Left lung (tissue), 14 donors: ENCODE measurements at regions of chr1 and their contacts with region 1.

Region 1: DNA sequence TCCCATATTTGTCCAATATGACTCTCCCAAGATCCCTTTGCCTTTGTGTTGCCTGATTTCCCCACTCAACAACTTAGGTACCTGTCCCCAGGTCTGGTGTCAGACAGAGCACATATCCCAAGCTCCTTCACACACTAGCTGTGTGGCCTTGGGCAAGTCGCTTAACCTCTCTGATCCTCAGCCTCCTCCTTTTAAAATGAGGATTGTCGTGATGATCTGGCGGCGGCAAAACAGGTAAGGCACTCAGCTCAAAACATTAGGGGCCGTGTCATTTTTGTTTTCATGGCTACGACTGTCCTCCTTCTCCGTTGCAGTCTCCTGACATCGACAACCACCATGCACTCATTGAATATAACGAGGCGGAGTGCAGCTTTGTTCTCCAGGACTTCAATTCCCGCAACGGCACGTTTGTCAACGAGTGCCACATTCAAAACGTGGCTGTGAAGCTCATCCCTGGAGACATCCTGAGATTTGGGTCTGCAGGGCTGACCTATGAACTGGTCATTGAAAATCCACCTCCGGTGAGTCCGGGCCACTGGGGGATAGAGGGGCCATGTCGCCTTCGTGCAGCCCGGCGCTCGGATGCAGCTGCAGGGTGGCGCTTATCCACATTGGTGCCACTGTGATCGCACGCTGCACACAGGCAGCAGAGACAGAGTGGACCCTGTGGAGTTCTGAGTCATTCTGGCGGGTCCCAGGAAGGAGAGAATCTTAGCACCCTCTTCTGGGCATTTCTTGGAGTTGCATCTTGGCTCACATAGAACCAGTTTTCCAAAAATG is 25.2 kb downstream of the FHAD1 start:
- DNase-seq: peak in 3 of 4 donors; percentile 66 to 80 (median 69)
- ATAC-seq: peak; percentile 99
- H3K4me3 ChIP-seq: no peak overlapping the region
- H3K27ac ChIP-seq: no peak overlapping the region
- H3K4me1 ChIP-seq: peaks cover 0 to 7% of the 10 kb centered on the region in 2 donors
- H3K27me3 ChIP-seq: no peaks in the 10 kb centered on the region
- CTCF ChIP-seq: peak; percentile 80 to 82

Region 2: GRCh38 chr1:15128520-15129313 is 143.5 kb before region 1 on chr1:
- intact Hi-C with region 1: loop called in 1 of 2 experiments (anchors 5 kb)
- DNase-seq: peak; percentile 55 to 85 (median 73)
- ATAC-seq: peak; percentile 99
- H3K4me3 ChIP-seq: no peak overlapping the region
- H3K27ac ChIP-seq: no peak overlapping the region
- H3K4me1 ChIP-seq: no peaks in the 10 kb centered on the region
- H3K27me3 ChIP-seq: no peaks in the 10 kb centered on the region
- CTCF ChIP-seq: peak; percentile 66 to 90

Region 3: DNA sequence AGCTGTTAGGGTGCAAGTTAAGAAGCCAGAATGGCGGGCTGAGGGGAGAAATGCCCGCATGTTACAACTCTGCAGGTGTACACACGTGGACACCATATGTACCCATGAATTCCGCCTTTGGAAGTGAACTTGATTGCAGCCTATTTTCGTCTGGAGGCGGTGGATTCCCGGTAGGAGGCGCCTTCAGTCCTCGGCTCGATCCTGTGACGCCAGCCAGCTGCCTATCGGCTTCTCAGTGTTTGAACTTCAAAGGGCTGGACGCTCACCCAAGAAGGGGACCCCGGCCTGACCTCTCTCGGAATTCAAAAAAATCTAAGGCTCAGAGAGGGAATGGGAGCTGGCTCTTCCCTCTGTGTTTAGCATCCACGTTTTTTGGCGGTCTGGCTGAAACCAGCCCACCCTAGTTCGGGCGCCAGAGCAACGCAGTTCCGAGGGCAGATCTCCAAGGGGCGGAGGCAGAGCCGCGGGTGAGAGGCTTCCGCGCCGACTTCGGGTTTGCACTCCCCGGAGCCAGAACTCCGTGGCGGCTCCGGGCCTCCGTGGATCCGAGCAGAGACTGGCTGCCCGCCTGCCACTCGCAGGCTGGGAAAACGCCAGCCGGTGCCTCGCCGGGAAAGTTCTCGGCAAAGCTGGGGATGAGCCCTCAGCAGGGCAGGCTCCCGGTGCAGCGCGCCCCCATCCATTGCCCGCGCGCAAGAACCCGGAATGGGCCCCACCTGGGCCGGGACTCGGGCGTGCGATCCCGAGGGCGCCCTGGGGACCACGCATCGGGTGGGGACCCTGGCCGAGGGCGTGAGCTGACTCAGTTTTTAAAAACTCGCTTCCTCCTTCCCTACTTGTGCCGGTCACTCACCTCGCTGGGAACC is 119.6 kb before region 1 on chr1:
- intact Hi-C with region 1: loop called (anchors 5 to 10 kb)
- DNase-seq: peak; percentile 89 to 93 (median 92)
- ATAC-seq: peak; percentile 77
- H3K4me3 ChIP-seq: peak overlapping the region; percentile 80 to 82
- H3K27ac ChIP-seq: peak overlapping the region; percentile 83 to 94
- H3K4me1 ChIP-seq: peaks cover 9 to 52% of the 10 kb centered on the region in 2 donors
- H3K27me3 ChIP-seq: peaks cover 0 to 46% of the 10 kb centered on the region in 2 donors
- CTCF ChIP-seq: peak; percentile 44 to 53